ENCODE measurements at regions of chr3 and their contacts with region 1.

Region 1: DNA sequence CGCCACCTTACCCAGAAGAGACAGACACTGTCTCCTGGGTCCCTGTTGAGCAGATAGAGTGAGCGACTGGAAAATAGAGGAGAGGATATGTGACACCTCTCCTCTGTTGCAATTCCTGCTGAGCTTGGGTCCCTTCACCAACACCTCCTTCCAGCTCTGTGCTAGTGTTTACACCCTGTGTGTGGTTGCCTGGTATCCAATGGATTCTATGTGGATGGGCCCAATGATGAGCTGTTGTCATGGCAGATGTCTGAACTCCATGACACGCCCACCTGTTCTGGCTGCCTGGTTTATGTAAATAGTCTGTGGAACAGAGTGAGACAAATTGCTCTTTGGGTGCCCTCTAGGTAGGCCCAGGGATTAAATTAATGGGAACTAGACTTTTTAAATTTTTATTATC is 23.7 kb downstream of the RBM5 start:
- DNase-seq: no peak

Region 2: GRCh38 chr3:50184242-50184978 is 71.9 kb after region 1 on chr3:
- in situ Hi-C with region 1: loop called (anchors 5 kb)
- DNase-seq: no peak